Activated CD8-positive, alpha-beta T cell treated with anti-CD3 and anti-CD28 coated beads, Interleukin-2, amount 10 ng/mL, durations not matched to agents 7 days and 5 days (primary cell): ENCODE measurements at regions of chr18 and their contacts with region 1.

Region 1: GRCh38 chr18:45879681-45880655 is 54.5 kb downstream of the SIGLEC15 start:
- DNase-seq: peak; percentile 76
- ATAC-seq: peak; percentile 91
- H3K4me3 Mint-ChIP-seq: no peak overlapping the region
- H3K27ac Mint-ChIP-seq: peak overlapping the region; percentile 55
- H3K4me1 Mint-ChIP-seq: peaks cover 14% of the 10 kb centered on the region
- H3K27me3 Mint-ChIP-seq: no peaks in the 10 kb centered on the region

Region 2: GRCh38 chr18:45554389-45554737 is 325.6 kb before region 1 on chr18:
- CTCF ChIA-PET with region 1: no interaction called
- POLR2A ChIA-PET with region 1: no interaction called
- DNase-seq: no peak
- ATAC-seq: no peak
- H3K4me3 Mint-ChIP-seq: no peak overlapping the region
- H3K27ac Mint-ChIP-seq: no peak overlapping the region
- H3K4me1 Mint-ChIP-seq: no peaks in the 10 kb centered on the region
- H3K27me3 Mint-ChIP-seq: peaks cover 5% of the 10 kb centered on the region

Region 3: GRCh38 chr18:45670281-45670962 is 209.5 kb before region 1 on chr18:
- CTCF ChIA-PET with region 1: interaction called, 156 read pairs
- POLR2A ChIA-PET with region 1: no interaction called
- DNase-seq: peak; percentile 68
- ATAC-seq: peak; percentile 63
- H3K4me3 Mint-ChIP-seq: peak overlapping the region; percentile 43
- H3K27ac Mint-ChIP-seq: peak overlapping the region; percentile 90
- H3K4me1 Mint-ChIP-seq: peaks cover 65% of the 10 kb centered on the region
- H3K27me3 Mint-ChIP-seq: no peaks in the 10 kb centered on the region

Region 4: GRCh38 chr18:45722899-45723298 is 157.1 kb before region 1 on chr18:
- CTCF ChIA-PET with region 1: interaction called, 95 read pairs
- POLR2A ChIA-PET with region 1: no interaction called
- DNase-seq: peak; percentile 81
- ATAC-seq: peak; percentile 90
- H3K4me3 Mint-ChIP-seq: no peak overlapping the region
- H3K27ac Mint-ChIP-seq: no peak overlapping the region
- H3K4me1 Mint-ChIP-seq: peaks cover 6% of the 10 kb centered on the region
- H3K27me3 Mint-ChIP-seq: peaks cover 6% of the 10 kb centered on the region

Region 5: DNA sequence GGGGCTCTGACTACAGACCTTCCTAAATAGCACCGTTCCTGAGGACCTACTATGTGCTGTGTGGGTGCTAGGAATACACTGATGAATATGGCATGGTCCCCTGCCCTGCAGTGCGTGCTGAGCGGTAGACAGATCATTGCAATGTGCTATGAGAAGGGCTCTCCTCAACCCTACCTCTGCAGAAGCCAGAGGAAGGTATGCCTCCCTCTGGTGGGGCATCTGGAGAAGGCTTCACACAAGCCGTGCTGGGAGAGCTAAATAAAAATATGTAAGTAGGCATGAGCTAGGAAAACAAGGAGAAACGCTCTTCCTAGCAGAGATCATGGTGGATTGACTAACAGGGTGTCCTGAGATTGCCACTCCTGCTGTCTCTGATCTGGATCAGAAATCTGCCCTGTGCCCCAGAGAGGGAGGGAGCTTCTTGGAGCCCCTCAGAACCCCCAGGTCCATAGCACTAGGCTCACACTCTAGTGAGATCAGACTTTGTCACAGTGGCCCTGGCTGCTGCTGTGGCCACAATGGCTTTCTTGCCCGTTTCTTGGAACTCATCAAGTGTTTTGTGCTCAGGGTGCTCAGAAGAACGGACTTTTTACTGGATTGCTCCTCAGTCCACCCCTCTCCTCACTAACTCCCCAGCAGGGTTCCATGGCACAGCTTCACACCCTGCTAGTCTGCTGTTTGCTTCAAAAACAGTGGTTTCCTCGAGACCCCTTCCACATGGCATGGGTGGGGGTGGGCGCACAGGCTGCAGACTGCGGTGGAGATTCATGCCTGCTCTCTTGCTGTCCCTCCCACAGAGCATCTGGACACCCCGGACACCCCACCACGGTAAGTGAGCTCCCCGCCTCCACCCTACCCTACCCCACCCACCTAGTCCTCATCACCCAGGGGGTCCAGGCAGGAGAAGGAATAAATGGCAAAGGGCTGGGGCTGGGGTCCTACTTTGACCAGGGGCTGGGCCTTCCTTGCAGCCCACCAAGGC is 40.3 kb before region 1 on chr18:
- CTCF ChIA-PET with region 1: interaction called, 14 read pairs
- POLR2A ChIA-PET with region 1: interaction called, 4 read pairs
- DNase-seq: peak; percentile 58
- ATAC-seq: peak; percentile 43
- H3K4me3 Mint-ChIP-seq: no peak overlapping the region
- H3K27ac Mint-ChIP-seq: no peak overlapping the region
- H3K4me1 Mint-ChIP-seq: peaks cover 10% of the 10 kb centered on the region
- H3K27me3 Mint-ChIP-seq: peaks cover 41% of the 10 kb centered on the region

Region 6: DNA sequence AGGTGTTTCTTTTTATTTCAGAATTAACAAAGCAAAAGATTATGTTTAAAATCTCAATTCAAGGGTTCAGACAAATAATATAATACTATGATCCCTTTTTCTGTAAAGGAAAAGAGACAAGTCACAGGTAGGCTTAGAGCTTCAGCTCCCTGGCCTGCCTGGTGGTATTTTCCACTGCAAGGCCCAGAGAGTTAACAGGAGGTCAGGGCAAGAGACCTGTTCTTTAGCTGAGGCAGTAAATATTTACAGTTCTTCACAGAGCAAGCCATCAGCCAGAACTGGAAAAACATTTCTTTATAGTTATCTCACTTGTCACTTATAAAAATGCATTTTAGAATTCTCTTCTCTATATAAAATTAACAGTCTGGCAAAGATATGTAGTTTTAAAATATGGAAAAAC is 17.0 kb after region 1 on chr18:
- CTCF ChIA-PET with region 1: interaction called, 17 read pairs
- POLR2A ChIA-PET with region 1: no interaction called
- DNase-seq: no peak
- ATAC-seq: no peak
- H3K4me3 Mint-ChIP-seq: no peak overlapping the region
- H3K27ac Mint-ChIP-seq: no peak overlapping the region
- H3K4me1 Mint-ChIP-seq: no peaks in the 10 kb centered on the region
- H3K27me3 Mint-ChIP-seq: no peaks in the 10 kb centered on the region

Region 7: GRCh38 chr18:45923138-45923537 is 43.2 kb after region 1 on chr18:
- CTCF ChIA-PET with region 1: no interaction called
- POLR2A ChIA-PET with region 1: no interaction called
- DNase-seq: no peak
- ATAC-seq: no peak
- H3K4me3 Mint-ChIP-seq: no peak overlapping the region
- H3K27ac Mint-ChIP-seq: no peak overlapping the region
- H3K4me1 Mint-ChIP-seq: no peaks in the 10 kb centered on the region
- H3K27me3 Mint-ChIP-seq: no peaks in the 10 kb centered on the region